ENCODE measurements at regions of chr10 and their contacts with region 1.

Region 1: GRCh38 chr10:110137142-110137545 is 70.3 kb upstream of the MXI1 start:
- DNase-seq: no peak
- H3K4me3 Mint-ChIP-seq: no peak overlapping the region
- H3K27ac Mint-ChIP-seq: peak overlapping the region; percentile 1
- H3K4me1 Mint-ChIP-seq: peaks cover 33% of the 10 kb centered on the region
- H3K27me3 Mint-ChIP-seq: no peaks in the 10 kb centered on the region

Region 2: DNA sequence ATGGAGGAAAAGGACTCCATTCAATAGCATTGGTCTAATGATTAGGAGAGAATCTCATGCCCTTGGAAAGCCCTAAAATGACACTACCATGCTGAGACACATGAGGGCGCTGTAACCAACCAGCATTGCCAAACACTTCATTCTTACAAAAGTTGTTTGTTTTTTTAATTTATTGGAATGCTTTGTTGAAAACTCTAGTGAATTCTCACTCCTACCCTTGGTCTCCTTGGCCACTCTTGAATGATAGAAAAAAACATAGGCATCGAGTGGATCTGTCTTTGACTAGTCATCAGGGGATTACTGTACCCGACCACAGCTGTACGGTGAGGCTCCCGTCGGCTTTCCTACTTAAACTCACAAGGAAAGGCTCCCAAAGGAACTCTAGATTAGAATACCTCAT is 158.7 kb before region 1 on chr10:
- intact Hi-C with region 1: loop called (anchors 2 kb)
- DNase-seq: peak; percentile 26
- H3K4me3 Mint-ChIP-seq: no peak overlapping the region
- H3K27ac Mint-ChIP-seq: no peak overlapping the region
- H3K4me1 Mint-ChIP-seq: peaks cover 8% of the 10 kb centered on the region
- H3K27me3 Mint-ChIP-seq: peaks cover 7% of the 10 kb centered on the region

Region 3: DNA sequence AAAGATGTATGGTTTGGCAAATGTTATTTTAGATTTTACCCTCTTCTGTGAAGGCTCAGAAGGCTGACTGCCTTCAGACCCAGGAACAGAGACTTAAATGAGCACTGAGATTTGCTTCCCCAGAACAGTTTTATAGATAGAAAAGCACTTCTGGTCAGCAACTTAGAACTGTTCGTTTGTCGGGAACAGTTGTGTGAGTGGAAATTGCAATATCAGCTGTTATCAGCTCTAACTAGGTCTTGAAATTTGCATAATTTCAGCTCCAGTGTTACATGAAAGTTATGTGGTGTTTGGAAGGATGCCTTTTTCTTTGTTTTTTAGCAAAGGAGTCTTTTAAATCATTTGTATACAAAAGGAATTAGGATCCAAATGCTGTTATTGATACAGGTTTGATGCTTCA is 13.6 kb before region 1 on chr10:
- intact Hi-C with region 1: no loop called
- DNase-seq: no peak
- H3K4me3 Mint-ChIP-seq: no peak overlapping the region
- H3K27ac Mint-ChIP-seq: no peak overlapping the region
- H3K4me1 Mint-ChIP-seq: no peaks in the 10 kb centered on the region
- H3K27me3 Mint-ChIP-seq: no peaks in the 10 kb centered on the region

Region 4: DNA sequence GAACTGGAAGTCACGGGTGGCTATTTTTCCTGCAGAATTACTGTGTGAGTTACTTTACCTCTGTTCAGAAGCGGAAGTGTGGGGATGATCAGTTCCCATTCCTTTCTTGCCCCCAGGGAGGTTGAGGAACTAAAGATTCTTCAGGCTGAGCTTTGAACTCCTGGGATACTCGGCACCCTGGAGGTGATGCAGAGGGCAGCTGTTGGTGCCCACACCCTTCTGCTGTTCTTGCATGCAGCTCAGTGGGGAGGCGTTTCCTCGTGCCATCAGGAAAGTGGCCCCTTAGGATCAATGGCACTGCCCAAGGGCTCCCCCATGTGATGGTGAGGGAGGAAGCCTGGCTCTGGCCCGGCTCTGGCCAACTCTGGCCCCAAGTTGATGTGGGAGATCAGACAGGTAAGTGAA is 25.6 kb after region 1 on chr10:
- intact Hi-C with region 1: loop called (anchors 1 kb)
- DNase-seq: no peak
- H3K4me3 Mint-ChIP-seq: no peak overlapping the region
- H3K27ac Mint-ChIP-seq: no peak overlapping the region
- H3K4me1 Mint-ChIP-seq: peaks cover 29% of the 10 kb centered on the region
- H3K27me3 Mint-ChIP-seq: peaks cover 82% of the 10 kb centered on the region